ENCODE measurements at regions of chr7 and their contacts with region 1.

Region 1: DNA sequence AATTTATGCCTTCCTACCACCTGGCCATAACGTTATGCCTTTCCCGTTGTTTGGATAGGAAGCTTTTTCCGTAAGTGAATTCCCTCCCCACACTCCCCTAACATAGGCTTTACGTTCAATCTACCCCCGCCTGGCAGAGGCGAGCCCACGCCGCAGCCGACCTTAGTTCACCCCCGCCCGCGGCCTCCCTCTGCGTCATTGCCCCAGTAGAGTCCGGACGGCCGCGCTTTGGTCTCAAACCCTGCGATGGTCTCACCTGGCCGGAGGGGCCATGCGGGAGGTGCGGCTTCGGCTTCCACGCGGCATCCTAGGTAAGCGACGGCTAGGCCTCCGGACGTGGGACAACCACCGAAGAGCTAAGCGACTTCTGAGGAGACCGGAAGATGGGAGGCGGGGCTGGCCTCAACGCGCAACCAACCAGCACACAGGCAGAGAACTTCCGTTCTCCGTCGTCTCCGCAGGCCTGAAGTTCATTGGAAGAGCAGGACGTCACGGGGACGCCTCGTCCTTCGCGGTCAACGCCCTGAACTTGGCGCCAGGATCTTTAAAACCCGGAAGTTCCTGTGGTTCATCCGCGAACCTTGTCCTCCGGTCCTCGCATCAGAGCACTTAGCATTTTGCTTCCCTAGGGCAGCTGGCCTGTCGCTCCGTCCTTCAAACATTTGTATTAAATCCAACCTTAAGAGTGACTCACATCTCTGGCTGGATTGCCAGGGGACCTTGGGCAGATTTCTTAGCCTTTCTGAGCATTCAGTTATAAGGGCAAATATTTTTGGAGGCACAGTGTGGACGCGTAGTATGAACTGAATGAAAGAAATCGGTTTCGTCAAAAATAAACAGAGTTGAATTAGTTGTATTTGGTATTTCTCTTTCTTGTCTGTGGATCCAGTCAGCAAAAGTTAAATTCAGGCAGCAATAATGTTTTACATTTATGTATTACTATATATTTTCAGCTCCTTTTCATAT is at the start of gene CHCHD2:
- DNase-seq: peak; percentile 96 to 98
- ATAC-seq: peak; percentile 99 to 100
- H3K4me3 ChIP-seq: peak within 1 kb of the TSS; percentile 75 to 95 (median 86)
- H3K27ac ChIP-seq: peak within 1 kb of the TSS; percentile 92 to 98 (median 94)
- H3K4me1 ChIP-seq: peaks cover 18 to 19% of the 10 kb centered on the region in 2 donors
- H3K27me3 ChIP-seq: no peaks in the 10 kb centered on the region
- CTCF ChIP-seq: peak in 1 of 5 experiments; percentile 2
- POLR2A ChIP-seq: peak; percentile 92 to 93
- total RNA-seq, gene CHCHD2: 540 to 822 (median 655) TPM

Region 2: GRCh38 chr7:55827577-55827976 is 278.8 kb before region 1 on chr7:
- in situ Hi-C with region 1: no loop called
- intact Hi-C with region 1: no loop called
- DNase-seq: no peak
- ATAC-seq: no peak
- H3K4me3 ChIP-seq: no peak overlapping the region
- H3K27ac ChIP-seq: no peak overlapping the region
- H3K4me1 ChIP-seq: no peaks in the 10 kb centered on the region
- H3K27me3 ChIP-seq: no peaks in the 10 kb centered on the region
- CTCF ChIP-seq: no peak
- POLR2A ChIP-seq: no peak

Region 3: DNA sequence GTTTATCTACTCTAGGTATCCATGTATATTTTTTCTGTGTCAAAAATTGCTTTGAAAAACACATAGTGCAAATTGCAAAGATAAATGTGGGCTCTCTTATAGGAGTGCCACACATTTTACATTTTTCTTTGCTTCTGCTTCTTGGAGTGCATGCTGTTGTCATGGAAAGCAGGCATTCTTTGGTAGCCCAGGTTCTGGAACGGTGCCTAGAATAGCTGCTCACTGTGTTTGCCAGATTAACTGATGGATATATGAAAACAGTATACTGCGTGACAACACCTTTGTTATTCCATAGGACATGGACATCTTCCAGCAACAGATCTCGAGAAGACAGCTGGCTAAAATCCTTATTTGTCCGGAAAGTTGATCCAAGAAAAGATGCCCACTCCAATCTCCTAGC is 128.6 kb before region 1 on chr7:
- in situ Hi-C with region 1: no loop called
- intact Hi-C with region 1: loop called (anchors 1 kb)
- DNase-seq: no peak
- ATAC-seq: no peak
- H3K4me3 ChIP-seq: no peak overlapping the region
- H3K27ac ChIP-seq: peak overlapping the region; percentile 96 to 98 (median 97)
- H3K4me1 ChIP-seq: peaks cover 34 to 48% of the 10 kb centered on the region in 2 donors
- H3K27me3 ChIP-seq: no peaks in the 10 kb centered on the region
- CTCF ChIP-seq: no peak
- POLR2A ChIP-seq: no peak

Region 4: DNA sequence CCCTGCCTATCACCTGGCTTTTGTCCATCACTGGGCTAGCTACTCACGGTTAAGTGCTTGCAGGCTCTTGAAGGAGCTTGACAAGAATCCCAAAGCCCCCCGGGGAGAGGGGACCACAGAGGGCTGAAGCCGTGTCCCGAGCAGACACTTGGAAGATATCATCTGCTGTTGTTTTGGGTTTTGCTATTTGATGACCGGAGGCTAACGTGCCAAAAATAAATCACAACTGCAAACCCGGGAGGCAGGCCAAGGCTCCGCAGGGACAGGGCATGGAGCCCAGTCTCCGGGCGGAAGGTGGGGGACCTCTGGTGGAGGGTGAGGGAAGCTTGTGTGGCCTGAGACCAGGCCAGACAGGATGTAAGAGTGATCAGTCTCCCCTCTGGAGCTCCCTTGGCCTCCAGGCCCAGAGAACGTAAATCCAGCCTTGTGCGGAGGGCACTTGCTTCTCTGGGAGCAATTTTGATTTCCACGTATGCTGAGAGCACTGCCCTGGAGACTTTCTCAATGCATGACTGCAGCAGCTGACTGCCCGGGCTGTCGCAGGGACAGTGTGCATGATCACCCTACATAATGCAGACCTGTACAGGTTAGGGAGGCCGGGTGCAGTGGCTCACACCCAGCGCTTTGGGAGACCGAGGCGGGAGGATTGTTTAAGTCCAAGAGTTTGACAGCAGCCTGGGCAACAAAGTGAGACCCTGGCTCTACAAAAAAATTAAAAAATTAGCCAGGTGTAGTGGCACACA is 13.4 kb before region 1 on chr7 and contains the start of gene PHKG1:
- in situ Hi-C with region 1: no loop called
- intact Hi-C with region 1: loop called (anchors 2 kb)
- DNase-seq: peak; percentile 84 to 93
- ATAC-seq: peak; percentile 76 to 78
- H3K4me3 ChIP-seq: peak within 1 kb of the TSS; percentile 52 to 64 (median 58)
- H3K27ac ChIP-seq: peak within 1 kb of the TSS; percentile 94 to 99 (median 95)
- H3K4me1 ChIP-seq: peaks cover 48 to 51% of the 10 kb centered on the region in 2 donors
- H3K27me3 ChIP-seq: no peaks in the 10 kb centered on the region
- CTCF ChIP-seq: peak in 4 of 5 experiments; percentile 46 to 82 (median 62)
- POLR2A ChIP-seq: peak; percentile 59 to 84
- total RNA-seq, gene PHKG1: 30.1 to 211 (median 57.2) TPM

Measured in gastrocnemius medialis (tissue), 4 donors.